HepG2 (cell line): ENCODE measurements at regions of chr1 and their contacts with region 1.

Region 1: DNA sequence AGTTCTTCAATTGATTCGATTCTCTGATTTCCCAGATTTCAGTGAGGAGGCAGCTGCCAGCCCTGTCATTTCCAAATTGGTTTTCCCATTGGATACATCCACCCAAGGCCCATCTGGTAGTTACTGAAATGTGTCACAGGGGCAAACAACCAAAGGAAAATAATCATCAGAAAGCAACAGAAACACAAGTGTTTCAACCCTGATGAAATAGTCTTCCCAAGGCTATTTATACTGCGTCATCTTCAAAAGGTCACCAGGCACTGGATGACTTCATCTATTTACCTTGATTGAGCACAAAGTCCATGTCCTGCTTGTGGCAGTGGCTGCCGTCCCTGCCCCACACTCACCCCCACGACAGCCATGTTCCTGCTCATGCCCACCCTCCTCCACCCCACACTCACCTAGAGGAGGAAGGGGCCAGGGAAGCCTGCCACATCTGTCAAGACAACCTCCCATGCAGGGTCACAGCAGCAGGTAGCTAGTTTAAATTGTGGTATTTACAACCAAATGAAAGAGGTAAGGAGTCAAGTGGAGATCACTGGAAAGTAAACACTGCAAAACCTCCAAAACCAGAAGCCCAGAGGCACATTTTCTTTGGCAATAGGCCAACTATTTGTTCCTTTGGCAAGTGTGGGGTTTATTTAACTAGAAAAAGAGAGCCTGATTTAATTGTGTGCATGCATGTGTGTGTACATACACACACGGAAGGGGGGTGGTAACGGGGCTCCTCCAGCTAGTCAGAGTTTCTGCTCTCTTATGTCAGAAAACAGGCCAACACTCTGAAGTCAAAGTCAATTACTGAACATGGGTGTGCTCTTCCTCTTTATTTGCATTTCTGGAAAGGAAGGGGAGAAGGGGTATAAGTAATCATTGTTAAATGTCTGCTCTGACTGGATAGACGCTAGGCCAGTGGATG is 49.5 kb upstream of the RAB4A start:
- DNase-seq: peak; percentile 98
- ATAC-seq: peak; percentile 85
- H3K4me3 ChIP-seq: peak overlapping the region; percentile 7 to 38 (median 9); a peak in 4 of 6 replicates
- H3K27ac ChIP-seq: peak overlapping the region; percentile 97
- H3K4me1 ChIP-seq: peaks cover 99% of the 10 kb centered on the region
- H3K27me3 ChIP-seq: no peaks in the 10 kb centered on the region
- CTCF ChIP-seq: no peak; the same call in 1 of the 2 replicates
- EP300 ChIP-seq: peak; percentile 64 to 84; a peak in 2 of 4 replicates
- POLR2A ChIP-seq: no peak
- RAD21 ChIP-seq: no peak

Region 2: GRCh38 chr1:228938537-228938901 is 282.8 kb before region 1 on chr1:
- CTCF ChIA-PET with region 1: no interaction called
- POLR2A ChIA-PET with region 1: no interaction called
- in situ Hi-C with region 1: no loop called
- intact Hi-C with region 1: loop called (anchors 1 kb)
- DNase-seq: peak; percentile 67
- ATAC-seq: peak; percentile 78
- H3K4me3 ChIP-seq: peak overlapping the region; percentile 2 to 31 (median 9); a peak in 3 of 6 replicates
- H3K27ac ChIP-seq: peak overlapping the region; percentile 74
- H3K4me1 ChIP-seq: peaks cover 81% of the 10 kb centered on the region
- H3K27me3 ChIP-seq: no peaks in the 10 kb centered on the region
- CTCF ChIP-seq: 0 out of 2 replicates have a peak, but pooled peaks have one; percentile 4
- EP300 ChIP-seq: peak in 1 of 2 experiments; percentile 17; a peak in 1 of 4 replicates
- POLR2A ChIP-seq: 0 out of 4 replicates have a peak, but pooled peaks of 1 of the 2 experiments have one; percentile 47
- RAD21 ChIP-seq: no peak

Region 3: GRCh38 chr1:229117664-229118300 is 103.6 kb before region 1 on chr1:
- CTCF ChIA-PET with region 1: no interaction called
- POLR2A ChIA-PET with region 1: no interaction called
- in situ Hi-C with region 1: no loop called
- intact Hi-C with region 1: no loop called
- DNase-seq: no peak
- ATAC-seq: no peak
- H3K4me3 ChIP-seq: no peak overlapping the region
- H3K27ac ChIP-seq: no peak overlapping the region
- H3K4me1 ChIP-seq: peaks cover 50% of the 10 kb centered on the region
- H3K27me3 ChIP-seq: no peaks in the 10 kb centered on the region
- CTCF ChIP-seq: no peak
- EP300 ChIP-seq: no peak
- POLR2A ChIP-seq: no peak
- RAD21 ChIP-seq: no peak

Region 4: GRCh38 chr1:229164836-229165735 is 56.3 kb before region 1 on chr1:
- CTCF ChIA-PET with region 1: no interaction called
- POLR2A ChIA-PET with region 1: no interaction called
- in situ Hi-C with region 1: no loop called
- intact Hi-C with region 1: loop called (anchors 1 kb)
- DNase-seq: peak; percentile 60
- ATAC-seq: peak; percentile 40; the same call in 1 of the 3 replicates
- H3K4me3 ChIP-seq: no peak overlapping the region
- H3K27ac ChIP-seq: no peak overlapping the region
- H3K4me1 ChIP-seq: peaks cover 59% of the 10 kb centered on the region
- H3K27me3 ChIP-seq: no peaks in the 10 kb centered on the region; a peak in 1 of 5 replicates
- CTCF ChIP-seq: no peak
- EP300 ChIP-seq: no peak
- POLR2A ChIP-seq: no peak
- RAD21 ChIP-seq: no peak

Region 5: GRCh38 chr1:229186373-229187056 is 34.8 kb before region 1 on chr1:
- CTCF ChIA-PET with region 1: no interaction called
- POLR2A ChIA-PET with region 1: no interaction called
- in situ Hi-C with region 1: no loop called
- intact Hi-C with region 1: no loop called
- DNase-seq: no peak
- ATAC-seq: no peak
- H3K4me3 ChIP-seq: no peak overlapping the region
- H3K27ac ChIP-seq: no peak overlapping the region
- H3K4me1 ChIP-seq: peaks cover 10% of the 10 kb centered on the region; the same call in 1 of the 2 replicates
- H3K27me3 ChIP-seq: no peaks in the 10 kb centered on the region
- CTCF ChIP-seq: no peak
- EP300 ChIP-seq: no peak
- POLR2A ChIP-seq: no peak
- RAD21 ChIP-seq: no peak

Region 6: DNA sequence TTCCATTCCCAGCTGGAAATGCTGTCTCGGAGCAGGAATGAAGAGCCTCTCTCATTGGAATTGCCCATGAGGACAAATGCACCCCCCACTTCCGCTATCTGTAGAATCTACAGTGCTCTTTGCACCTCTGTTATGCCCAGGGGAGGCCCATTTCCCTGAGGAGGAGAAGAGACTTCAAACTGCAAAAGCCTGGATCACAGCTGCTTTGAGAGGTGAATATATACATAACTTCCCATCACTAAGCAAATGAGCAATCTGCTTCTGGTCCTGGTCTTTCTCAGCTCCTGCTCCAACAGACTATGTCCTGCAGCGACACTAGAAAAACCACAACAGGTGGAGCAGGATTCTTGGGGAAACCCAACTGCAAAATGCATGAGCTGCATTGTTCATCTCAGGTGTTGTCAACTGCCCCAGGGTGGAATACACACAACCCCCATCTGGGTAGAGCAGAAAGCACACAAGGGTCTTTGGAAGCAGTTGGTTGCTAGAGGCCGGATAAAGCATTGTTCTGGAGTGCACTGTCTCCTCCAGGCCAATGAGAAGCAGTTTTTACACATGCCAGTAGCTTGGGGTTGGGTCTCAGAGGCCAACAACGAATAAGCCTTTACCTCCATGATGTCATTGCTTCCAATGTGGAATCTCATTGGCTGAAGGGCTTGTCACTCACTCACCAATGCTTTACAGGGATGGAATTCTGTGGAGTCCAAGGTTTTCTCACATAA is 18.2 kb before region 1 on chr1:
- CTCF ChIA-PET with region 1: no interaction called
- POLR2A ChIA-PET with region 1: interaction called, 16 read pairs
- in situ Hi-C with region 1: no loop called
- intact Hi-C with region 1: no loop called
- DNase-seq: peak; percentile 94
- ATAC-seq: peak; percentile 98
- H3K4me3 ChIP-seq: peak overlapping the region in 1 of 3 experiments; percentile 47; a peak in 2 of 6 replicates
- H3K27ac ChIP-seq: peak overlapping the region; percentile 81
- H3K4me1 ChIP-seq: peaks cover 48% of the 10 kb centered on the region
- H3K27me3 ChIP-seq: no peaks in the 10 kb centered on the region
- CTCF ChIP-seq: no peak
- EP300 ChIP-seq: peak in 1 of 2 experiments; percentile 62; a peak in 2 of 4 replicates
- POLR2A ChIP-seq: peak in 1 of 2 experiments; percentile 50; a peak in 2 of 4 replicates
- RAD21 ChIP-seq: no peak

Region 7: GRCh38 chr1:229280921-229281320 is 59.6 kb after region 1 on chr1:
- CTCF ChIA-PET with region 1: no interaction called
- POLR2A ChIA-PET with region 1: no interaction called
- in situ Hi-C with region 1: no loop called
- intact Hi-C with region 1: no loop called
- DNase-seq: no peak
- ATAC-seq: no peak
- H3K4me3 ChIP-seq: no peak overlapping the region
- H3K27ac ChIP-seq: no peak overlapping the region
- H3K4me1 ChIP-seq: peaks cover 95% of the 10 kb centered on the region
- H3K27me3 ChIP-seq: no peaks in the 10 kb centered on the region
- CTCF ChIP-seq: no peak
- EP300 ChIP-seq: no peak
- POLR2A ChIP-seq: no peak
- RAD21 ChIP-seq: no peak